Activated CD4-positive, alpha-beta memory T cell treated with anti-CD3 and anti-CD28 coated beads for 36 hours (primary cell): ENCODE measurements at regions of chr1 and their contacts with region 1.

Region 1: GRCh38 chr1:222713091-222713961 is 962 bp downstream of the BROX start:
- DNase-seq: peak; percentile 94
- H3K4me3 Mint-ChIP-seq: peak overlapping the region; percentile 97
- H3K27ac Mint-ChIP-seq: peak overlapping the region; percentile 98
- H3K4me1 Mint-ChIP-seq: peaks cover 47% of the 10 kb centered on the region
- H3K27me3 Mint-ChIP-seq: no peaks in the 10 kb centered on the region

Region 2: DNA sequence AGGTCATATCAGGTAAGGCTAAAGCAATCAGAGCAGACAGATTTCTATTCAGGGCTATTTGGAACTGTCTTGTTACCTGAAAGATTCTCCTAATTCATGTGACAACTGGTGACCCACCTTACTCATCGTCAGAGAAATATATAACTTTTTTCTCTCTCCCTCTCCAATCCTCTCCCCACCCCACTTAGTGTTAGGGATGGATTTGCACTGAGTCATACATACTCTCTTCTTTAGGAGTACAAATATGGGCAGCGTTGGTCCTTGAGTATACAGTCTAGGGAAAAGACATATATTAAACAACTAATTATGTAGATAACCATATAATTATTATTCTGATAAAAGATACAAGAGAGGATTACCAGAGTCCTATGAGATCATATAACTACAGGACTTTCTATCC is 411.7 kb before region 1 on chr1:
- CTCF ChIA-PET with region 1: no interaction called
- POLR2A ChIA-PET with region 1: no interaction called
- intact Hi-C with region 1: no loop called
- DNase-seq: no peak
- H3K4me3 Mint-ChIP-seq: no peak overlapping the region
- H3K27ac Mint-ChIP-seq: no peak overlapping the region
- H3K4me1 Mint-ChIP-seq: peaks cover 6% of the 10 kb centered on the region
- H3K27me3 Mint-ChIP-seq: no peaks in the 10 kb centered on the region

Region 3: DNA sequence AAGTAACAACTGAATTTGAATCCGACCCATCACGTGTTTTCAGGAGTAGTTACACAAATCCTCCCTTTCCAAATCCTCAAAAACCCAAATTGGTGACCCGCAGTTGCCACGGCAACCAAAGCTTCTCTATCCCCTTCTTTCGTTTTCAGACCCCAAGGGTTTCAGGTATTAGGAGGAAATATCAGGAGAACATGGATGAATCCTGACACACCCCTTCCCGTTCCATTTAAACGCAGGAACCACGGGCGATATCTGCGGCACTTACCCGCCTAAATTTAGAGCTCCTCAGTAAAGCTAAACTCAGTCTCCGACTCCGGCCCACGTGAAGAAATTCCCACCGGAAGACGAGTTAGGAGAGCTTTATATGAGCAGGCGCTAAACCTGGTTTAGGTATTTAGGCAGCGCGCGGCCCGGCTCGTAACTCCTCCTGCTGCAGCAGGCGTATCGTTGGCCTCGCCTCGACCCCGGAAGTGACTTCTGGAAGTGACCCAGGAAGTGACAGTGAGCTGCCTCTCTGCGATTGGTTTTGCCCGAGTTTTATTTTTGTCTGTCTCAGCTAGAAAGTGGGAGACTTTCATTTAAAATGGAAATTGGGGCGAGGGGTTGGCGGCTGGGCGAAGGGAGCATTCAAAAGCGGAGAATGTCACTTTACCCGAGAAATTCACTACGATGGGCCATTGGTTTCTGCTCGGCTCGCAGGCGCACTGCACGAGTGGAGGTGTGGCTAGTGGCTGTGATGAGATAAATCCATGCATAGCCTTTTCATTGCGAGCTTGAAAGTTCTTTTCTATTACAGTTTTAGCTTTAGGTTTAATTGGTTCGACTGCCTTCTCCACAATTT is 123.6 kb before region 1 on chr1 and contains the start of gene TAF1A:
- CTCF ChIA-PET with region 1: no interaction called
- POLR2A ChIA-PET with region 1: interaction called, 9 read pairs
- intact Hi-C with region 1: loop called (anchors 2 kb)
- DNase-seq: peak; percentile 92
- H3K4me3 Mint-ChIP-seq: peak within 1 kb of the TSS; percentile 97
- H3K27ac Mint-ChIP-seq: peak within 1 kb of the TSS; percentile 96
- H3K4me1 Mint-ChIP-seq: peaks cover 45% of the 10 kb centered on the region
- H3K27me3 Mint-ChIP-seq: no peaks in the 10 kb centered on the region
- total RNA-seq, gene TAF1A: 19.1 to 19.6 TPM

Region 4: GRCh38 chr1:222643938-222644635 is 69.2 kb before region 1 on chr1:
- CTCF ChIA-PET with region 1: interaction called, 3 read pairs
- POLR2A ChIA-PET with region 1: interaction called, 15 read pairs
- intact Hi-C with region 1: loop called (anchors 1 kb)
- DNase-seq: peak; percentile 99
- H3K4me3 Mint-ChIP-seq: peak overlapping the region; percentile 99
- H3K27ac Mint-ChIP-seq: peak overlapping the region; percentile 94
- H3K4me1 Mint-ChIP-seq: peaks cover 22% of the 10 kb centered on the region
- H3K27me3 Mint-ChIP-seq: no peaks in the 10 kb centered on the region

Region 5: DNA sequence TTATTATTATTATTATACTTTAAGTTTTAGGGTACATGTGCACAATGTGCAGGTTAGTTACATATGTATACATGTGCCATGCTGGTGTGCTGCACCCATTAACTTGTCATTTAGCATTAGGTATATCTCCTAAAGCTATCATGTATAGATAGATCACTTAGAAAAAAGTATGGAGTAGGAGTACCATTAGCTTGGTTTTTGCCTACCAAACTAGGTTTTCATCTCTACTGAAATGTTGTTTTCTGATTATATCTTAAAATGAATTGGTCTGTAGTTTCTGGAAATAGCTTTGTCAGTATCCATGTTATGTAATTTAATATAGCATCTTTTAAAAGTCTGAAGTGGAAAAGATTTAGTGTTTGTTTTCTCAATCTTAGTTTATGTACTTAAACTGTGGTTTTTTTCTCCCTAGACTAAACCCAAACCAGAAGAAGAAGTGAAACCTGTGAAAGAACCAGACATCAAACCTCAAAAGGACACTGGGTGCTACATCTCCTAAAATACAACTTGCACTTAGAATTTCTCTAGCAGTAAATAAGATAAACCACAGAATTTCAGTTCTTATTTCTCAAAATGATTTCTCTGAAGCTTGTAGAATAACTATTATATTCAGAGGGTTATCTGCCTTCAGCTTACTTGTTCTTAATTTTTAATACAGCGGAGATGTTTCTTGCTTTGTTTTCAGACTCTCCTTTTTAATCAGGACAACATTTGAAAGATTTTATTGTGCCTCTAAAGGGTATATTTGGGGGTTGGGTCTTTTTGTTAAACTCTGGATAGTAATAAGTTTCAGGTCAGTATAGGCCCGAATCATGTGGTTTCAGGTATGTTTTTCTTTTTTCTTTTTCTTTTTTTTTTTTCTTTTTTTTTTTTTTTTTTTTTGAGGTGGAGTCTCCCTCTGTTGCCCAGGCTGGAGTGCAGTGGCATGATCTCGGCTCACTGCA is 19.2 kb after region 1 on chr1:
- CTCF ChIA-PET with region 1: no interaction called
- POLR2A ChIA-PET with region 1: no interaction called
- intact Hi-C with region 1: loop called (anchors 2 kb)
- DNase-seq: no peak
- H3K4me3 Mint-ChIP-seq: no peak overlapping the region
- H3K27ac Mint-ChIP-seq: peak overlapping the region; percentile 51
- H3K4me1 Mint-ChIP-seq: peaks cover 8% of the 10 kb centered on the region
- H3K27me3 Mint-ChIP-seq: no peaks in the 10 kb centered on the region

Region 6: DNA sequence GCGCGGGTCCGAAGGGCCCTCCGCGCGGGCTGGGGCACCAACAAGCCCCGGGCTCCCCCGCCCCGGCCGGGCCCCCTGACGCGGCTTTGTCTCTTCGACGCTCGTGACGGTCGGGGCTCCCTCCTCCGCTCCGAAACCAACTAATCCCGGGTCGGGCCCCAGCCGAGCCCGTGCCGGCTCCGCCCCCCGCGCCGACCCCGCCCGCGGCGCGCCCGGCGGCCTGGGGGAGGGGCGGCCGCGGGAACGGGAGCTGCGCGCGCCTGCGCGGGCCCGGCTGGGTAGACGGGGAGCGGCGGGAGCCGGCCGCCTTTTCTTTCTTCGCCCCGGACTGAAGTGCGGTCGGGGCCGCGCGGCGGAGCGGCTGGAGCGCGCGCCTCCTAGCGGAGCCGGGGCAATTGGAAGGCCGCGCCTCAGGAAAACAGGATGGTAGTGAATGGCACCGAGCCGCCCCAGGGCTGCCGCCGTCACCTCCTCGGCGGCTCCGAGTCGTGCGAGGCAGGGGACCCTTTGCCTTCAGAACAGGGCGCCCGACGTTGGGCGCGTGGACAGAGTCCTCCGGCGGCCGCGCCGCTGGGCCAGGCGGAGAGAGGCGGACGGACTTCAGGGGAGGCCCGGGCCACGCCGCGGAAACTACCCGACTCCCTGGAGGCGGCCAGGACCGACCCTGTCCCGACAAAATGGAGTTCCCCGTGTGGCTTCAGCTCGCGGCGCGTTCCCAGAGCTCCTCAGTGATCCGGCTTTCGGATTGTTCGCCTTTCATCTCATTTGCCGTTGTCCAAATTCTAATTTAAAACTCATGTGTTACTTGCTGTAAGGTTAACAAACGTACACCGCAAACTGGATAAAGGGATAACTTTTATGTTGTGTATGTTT is 1132.7 kb after region 1 on chr1 and contains the start of gene TP53BP2:
- CTCF ChIA-PET with region 1: no interaction called
- POLR2A ChIA-PET with region 1: no interaction called
- intact Hi-C with region 1: loop called (anchors 5 kb)
- DNase-seq: peak; percentile 88
- H3K4me3 Mint-ChIP-seq: peak within 1 kb of the TSS; percentile 98
- H3K27ac Mint-ChIP-seq: peak within 1 kb of the TSS; percentile 100
- H3K4me1 Mint-ChIP-seq: peaks cover 45% of the 10 kb centered on the region
- H3K27me3 Mint-ChIP-seq: no peaks in the 10 kb centered on the region
- total RNA-seq, gene TP53BP2: 56.0 to 58.7 TPM